ENCODE measurements at regions of chr13 and their contacts with region 1.

Region 1: GRCh38 chr13:85441364-85441763 is 357.9 kb downstream of the SLITRK6 start:
- DNase-seq: no peak
- H3K4me3 ChIP-seq: no peak overlapping the region
- H3K27ac ChIP-seq: no peak overlapping the region
- H3K4me1 ChIP-seq: no peaks in the 10 kb centered on the region
- H3K27me3 ChIP-seq: no peaks in the 10 kb centered on the region
- CTCF ChIP-seq: no peak

Region 2: GRCh38 chr13:85386424-85386823 is 54.9 kb before region 1 on chr13:
- intact Hi-C with region 1: no loop called
- DNase-seq: no peak
- H3K4me3 ChIP-seq: no peak overlapping the region
- H3K27ac ChIP-seq: no peak overlapping the region
- H3K4me1 ChIP-seq: no peaks in the 10 kb centered on the region
- H3K27me3 ChIP-seq: no peaks in the 10 kb centered on the region
- CTCF ChIP-seq: no peak

Region 3: DNA sequence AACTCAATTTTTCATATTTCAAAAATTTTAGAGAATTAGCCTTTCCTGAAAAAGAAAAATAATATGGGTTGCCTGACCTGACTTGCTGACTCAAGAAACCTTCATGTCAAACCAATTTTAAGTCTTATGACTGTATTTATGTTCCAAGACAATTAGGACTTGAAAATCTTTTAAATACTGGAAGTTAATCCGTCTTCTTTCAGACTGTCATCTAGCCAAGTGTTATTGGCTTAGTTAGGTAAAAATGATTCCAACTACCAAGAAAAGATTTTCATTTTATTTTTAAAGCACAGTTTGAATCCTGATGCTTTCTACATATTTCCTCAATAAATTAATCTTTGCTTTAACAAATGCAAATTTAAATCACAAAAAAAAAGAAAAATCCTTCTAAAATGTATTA is 20.3 kb after region 1 on chr13:
- intact Hi-C with region 1: loop called (anchors 1 kb)
- DNase-seq: no peak
- H3K4me3 ChIP-seq: no peak overlapping the region
- H3K27ac ChIP-seq: no peak overlapping the region
- H3K4me1 ChIP-seq: no peaks in the 10 kb centered on the region
- H3K27me3 ChIP-seq: no peaks in the 10 kb centered on the region
- CTCF ChIP-seq: no peak

Region 4: DNA sequence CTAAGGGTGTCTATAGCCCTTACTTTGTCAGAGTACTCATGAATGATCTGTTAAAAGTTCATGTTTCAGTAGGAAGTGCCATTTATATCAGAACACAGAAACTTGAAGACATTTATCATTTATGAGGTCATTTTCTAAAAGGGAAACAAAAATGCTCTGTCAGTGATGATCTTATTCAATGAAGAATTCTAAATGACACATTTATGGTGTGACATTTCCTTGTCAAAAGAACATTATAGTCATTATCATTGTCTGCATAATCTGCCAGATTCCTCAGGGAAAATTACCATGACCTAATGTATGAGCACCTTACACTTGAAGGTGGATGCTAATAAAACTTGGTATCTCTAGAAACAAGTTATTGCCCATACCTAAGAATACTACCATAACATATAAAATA is 1211.6 kb after region 1 on chr13:
- intact Hi-C with region 1: no loop called
- DNase-seq: no peak
- H3K4me3 ChIP-seq: no peak overlapping the region
- H3K27ac ChIP-seq: no peak overlapping the region
- H3K4me1 ChIP-seq: no peaks in the 10 kb centered on the region
- H3K27me3 ChIP-seq: no peaks in the 10 kb centered on the region
- CTCF ChIP-seq: no peak

Measured in ascending aorta (tissue), 2 donors.